ENCODE measurements at regions of chr1 and their contacts with region 1.

Region 1: GRCh38 chr1:227489572-227489971 is 73.8 kb upstream of the ZNF678 start:
- DNase-seq: no peak
- ATAC-seq: no peak
- H3K4me3 ChIP-seq: no peak overlapping the region
- H3K27ac ChIP-seq: no peak overlapping the region
- H3K4me1 ChIP-seq: no peaks in the 10 kb centered on the region
- H3K27me3 ChIP-seq: no peaks in the 10 kb centered on the region
- CTCF ChIP-seq: no peak
- EP300 ChIP-seq: no peak
- POLR2A ChIP-seq: no peak
- RAD21 ChIP-seq: no peak

Region 2: DNA sequence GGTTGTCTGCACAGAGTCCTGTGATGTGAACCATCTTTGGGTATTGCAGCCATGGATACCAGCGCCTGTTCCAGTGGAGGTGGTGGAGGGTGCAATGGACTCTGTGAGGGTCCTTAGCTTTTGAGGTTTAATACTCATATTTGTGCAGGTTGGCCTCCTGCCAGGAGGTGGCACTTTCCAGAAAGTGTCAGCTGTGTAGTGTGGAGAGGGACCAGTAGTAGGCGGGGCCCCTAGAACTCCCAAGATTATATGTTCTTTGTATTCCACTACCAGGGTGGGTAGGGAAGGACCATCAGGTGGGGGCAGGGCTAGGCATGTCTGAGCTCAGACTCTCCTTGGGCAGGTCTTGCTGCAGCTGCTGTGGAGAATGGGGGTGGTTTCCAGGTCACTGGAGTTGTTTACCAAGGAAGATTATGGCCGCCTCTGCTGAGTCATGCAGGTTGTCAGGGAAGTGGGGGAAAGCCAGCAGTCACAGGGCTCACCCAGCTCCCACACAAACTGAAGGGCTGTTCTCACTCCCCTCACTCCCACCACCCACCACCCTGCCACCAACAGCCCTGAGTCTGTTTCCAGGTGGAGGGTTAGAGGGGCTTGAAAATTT is 42.5 kb after region 1 on chr1:
- CTCF ChIA-PET with region 1: no interaction called
- POLR2A ChIA-PET with region 1: no interaction called
- RAD21 ChIA-PET with region 1: no interaction called
- SMC1A ChIA-PET with region 1: no interaction called
- in situ Hi-C with region 1: no loop called
- intact Hi-C with region 1: no loop called
- DNase-seq: no peak
- ATAC-seq: no peak
- H3K4me3 ChIP-seq: no peak overlapping the region
- H3K27ac ChIP-seq: no peak overlapping the region
- H3K4me1 ChIP-seq: no peaks in the 10 kb centered on the region
- H3K27me3 ChIP-seq: no peaks in the 10 kb centered on the region
- CTCF ChIP-seq: no peak
- EP300 ChIP-seq: no peak
- POLR2A ChIP-seq: no peak
- RAD21 ChIP-seq: no peak

Region 3: GRCh38 chr1:227728059-227728891 is 238.7 kb after region 1 on chr1:
- CTCF ChIA-PET with region 1: no interaction called
- POLR2A ChIA-PET with region 1: interaction called, 5 read pairs
- RAD21 ChIA-PET with region 1: no interaction called
- SMC1A ChIA-PET with region 1: no interaction called
- in situ Hi-C with region 1: no loop called
- intact Hi-C with region 1: loop called (anchors 10 kb)
- DNase-seq: peak; percentile 24
- ATAC-seq: peak; percentile 79
- H3K4me3 ChIP-seq: peak overlapping the region; percentile 68
- H3K27ac ChIP-seq: peak overlapping the region; percentile 33; the same call in 1 of the 2 replicates
- H3K4me1 ChIP-seq: peaks cover 14% of the 10 kb centered on the region
- H3K27me3 ChIP-seq: no peaks in the 10 kb centered on the region
- CTCF ChIP-seq: no peak
- EP300 ChIP-seq: no peak
- POLR2A ChIP-seq: peak; percentile 59
- RAD21 ChIP-seq: no peak

Measured in GM12878 (cell line).